ENCODE measurements at regions of chr16 and their contacts with region 1.

Region 1: DNA sequence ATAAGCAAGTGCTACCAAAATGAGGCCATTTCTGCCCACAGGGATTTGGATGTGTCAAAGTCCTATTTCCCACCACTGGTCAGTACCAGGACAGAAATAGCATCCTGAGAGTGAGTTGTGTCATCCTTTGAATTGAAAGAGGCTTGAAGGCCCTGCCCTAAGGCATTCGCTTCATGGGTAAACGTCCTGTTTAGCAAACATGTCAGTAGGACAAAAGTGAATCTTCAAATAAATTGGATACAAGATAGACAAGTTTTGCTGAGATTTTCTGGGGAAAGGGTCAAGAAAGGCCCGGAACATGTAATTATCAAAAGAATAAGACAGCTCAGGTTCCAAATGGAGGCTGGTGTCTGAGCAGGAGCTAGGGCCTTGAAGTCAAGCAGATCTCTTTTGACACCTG is 162.3 kb upstream of the MON1B start:
- DNase-seq: no peak
- H3K4me3 ChIP-seq: no peak overlapping the region
- H3K27ac ChIP-seq: no peak overlapping the region
- H3K4me1 ChIP-seq: no peaks in the 10 kb centered on the region
- H3K27me3 ChIP-seq: no peaks in the 10 kb centered on the region
- CTCF ChIP-seq: no peak

Region 2: DNA sequence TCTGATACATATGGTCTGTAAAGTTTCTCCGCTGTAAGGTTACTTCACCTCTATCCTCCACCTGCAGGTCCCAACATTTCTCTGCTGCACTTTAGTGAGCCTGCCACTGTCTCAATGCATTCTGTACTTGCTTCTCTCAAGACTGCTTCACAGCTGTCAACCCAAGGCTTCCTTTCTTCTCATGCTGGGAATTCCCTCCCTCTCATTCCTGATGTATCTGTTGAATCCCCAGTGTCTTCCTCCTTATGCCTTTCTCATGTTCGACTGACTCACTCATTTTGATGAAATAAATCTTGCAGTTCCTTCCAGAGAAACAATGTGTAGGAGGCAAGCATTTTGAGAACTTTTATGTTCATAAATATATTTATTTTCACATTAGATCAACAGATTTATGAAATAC is 463.1 kb before region 1 on chr16:
- intact Hi-C with region 1: loop called (anchors 5 kb)
- DNase-seq: no peak
- H3K4me3 ChIP-seq: no peak overlapping the region
- H3K27ac ChIP-seq: no peak overlapping the region
- H3K4me1 ChIP-seq: no peaks in the 10 kb centered on the region
- H3K27me3 ChIP-seq: no peaks in the 10 kb centered on the region
- CTCF ChIP-seq: no peak

Region 3: GRCh38 chr16:76583466-76583865 is 445.2 kb before region 1 on chr16:
- intact Hi-C with region 1: no loop called
- DNase-seq: no peak
- H3K4me3 ChIP-seq: no peak overlapping the region
- H3K27ac ChIP-seq: no peak overlapping the region
- H3K4me1 ChIP-seq: no peaks in the 10 kb centered on the region
- H3K27me3 ChIP-seq: no peaks in the 10 kb centered on the region
- CTCF ChIP-seq: no peak

Region 4: DNA sequence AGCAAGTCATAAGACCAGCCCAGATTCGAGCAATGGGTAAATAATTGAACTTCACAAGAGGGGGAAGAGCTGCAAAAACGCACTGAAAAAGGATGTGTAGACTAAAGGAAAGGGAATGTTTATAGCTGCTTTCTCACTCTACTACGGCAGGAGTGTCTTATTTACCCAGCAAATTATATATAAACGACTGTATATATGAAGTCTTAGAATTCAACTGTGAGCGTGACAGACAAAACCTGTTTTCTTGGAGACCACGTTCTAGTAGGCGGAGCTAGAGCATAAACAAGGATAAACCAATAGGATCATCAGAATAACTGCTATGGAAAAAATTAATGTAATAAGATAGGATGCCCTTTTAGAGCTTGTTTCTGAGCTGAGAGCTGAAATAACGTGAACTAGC is 232.2 kb before region 1 on chr16:
- intact Hi-C with region 1: no loop called
- DNase-seq: no peak
- H3K4me3 ChIP-seq: no peak overlapping the region
- H3K27ac ChIP-seq: no peak overlapping the region
- H3K4me1 ChIP-seq: no peaks in the 10 kb centered on the region
- H3K27me3 ChIP-seq: no peaks in the 10 kb centered on the region
- CTCF ChIP-seq: no peak

Region 5: DNA sequence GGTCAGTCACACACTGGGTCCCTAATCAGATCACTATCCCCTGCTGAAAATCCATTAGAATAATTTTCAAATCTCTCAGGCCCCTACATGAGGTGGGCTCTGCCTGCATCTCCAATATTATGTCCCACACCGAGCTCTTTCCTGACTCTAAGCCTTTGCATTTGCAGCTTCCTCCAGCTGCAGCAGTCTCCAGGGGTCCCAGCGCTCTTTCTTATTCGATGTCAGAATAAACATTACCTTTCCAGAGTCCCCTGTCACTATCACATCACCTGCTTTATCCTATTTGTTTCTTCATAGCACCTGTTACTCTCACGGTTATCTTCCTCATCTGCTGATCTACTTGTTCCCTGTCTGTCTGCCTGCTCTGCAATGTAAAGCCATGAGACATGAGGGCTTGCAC is 105.1 kb after region 1 on chr16:
- intact Hi-C with region 1: no loop called
- DNase-seq: no peak
- H3K4me3 ChIP-seq: no peak overlapping the region
- H3K27ac ChIP-seq: no peak overlapping the region
- H3K4me1 ChIP-seq: no peaks in the 10 kb centered on the region
- H3K27me3 ChIP-seq: no peaks in the 10 kb centered on the region
- CTCF ChIP-seq: no peak

Region 6: DNA sequence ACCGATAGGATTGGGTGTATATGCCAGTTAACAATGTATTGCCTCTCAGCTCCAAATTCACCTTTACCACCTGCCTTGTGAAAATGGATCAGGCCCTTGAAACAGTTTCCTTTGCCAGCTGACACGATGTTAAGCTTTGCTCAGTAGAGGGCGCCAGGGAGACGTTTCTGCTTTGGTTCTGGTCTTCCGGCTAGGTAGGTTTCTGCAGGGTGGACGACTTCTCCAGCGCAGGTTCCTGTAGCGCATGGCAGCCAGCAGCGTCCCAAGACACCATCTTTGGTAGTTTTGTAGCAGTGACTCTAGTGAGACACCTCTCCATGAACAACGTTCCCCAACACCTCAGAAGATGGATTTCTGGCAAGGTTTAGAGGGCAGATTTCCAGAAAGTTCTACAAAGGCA is 194.5 kb after region 1 on chr16:
- intact Hi-C with region 1: no loop called
- DNase-seq: no peak
- H3K4me3 ChIP-seq: no peak overlapping the region
- H3K27ac ChIP-seq: no peak overlapping the region
- H3K4me1 ChIP-seq: peaks cover 0 to 4% (median 0%) of the 10 kb centered on the region in 4 donors
- H3K27me3 ChIP-seq: no peaks in the 10 kb centered on the region
- CTCF ChIP-seq: no peak